Activated naive CD4-positive, alpha-beta T cell treated with anti-CD3 and anti-CD28 coated beads, Interleukin-2, amount 10 ng/mL, durations not matched to agents 7 days and 5 days (primary cell): ENCODE measurements at regions of chr7 and their contacts with region 1.

Region 1: GRCh38 chr7:38215735-38216670 is 38.0 kb downstream of the STARD3NL start:
- DNase-seq: peak; percentile 85
- H3K4me3 Mint-ChIP-seq: no peak overlapping the region
- H3K27ac Mint-ChIP-seq: no peak overlapping the region
- H3K4me1 Mint-ChIP-seq: peaks cover 32% of the 10 kb centered on the region
- H3K27me3 Mint-ChIP-seq: no peaks in the 10 kb centered on the region

Region 2: DNA sequence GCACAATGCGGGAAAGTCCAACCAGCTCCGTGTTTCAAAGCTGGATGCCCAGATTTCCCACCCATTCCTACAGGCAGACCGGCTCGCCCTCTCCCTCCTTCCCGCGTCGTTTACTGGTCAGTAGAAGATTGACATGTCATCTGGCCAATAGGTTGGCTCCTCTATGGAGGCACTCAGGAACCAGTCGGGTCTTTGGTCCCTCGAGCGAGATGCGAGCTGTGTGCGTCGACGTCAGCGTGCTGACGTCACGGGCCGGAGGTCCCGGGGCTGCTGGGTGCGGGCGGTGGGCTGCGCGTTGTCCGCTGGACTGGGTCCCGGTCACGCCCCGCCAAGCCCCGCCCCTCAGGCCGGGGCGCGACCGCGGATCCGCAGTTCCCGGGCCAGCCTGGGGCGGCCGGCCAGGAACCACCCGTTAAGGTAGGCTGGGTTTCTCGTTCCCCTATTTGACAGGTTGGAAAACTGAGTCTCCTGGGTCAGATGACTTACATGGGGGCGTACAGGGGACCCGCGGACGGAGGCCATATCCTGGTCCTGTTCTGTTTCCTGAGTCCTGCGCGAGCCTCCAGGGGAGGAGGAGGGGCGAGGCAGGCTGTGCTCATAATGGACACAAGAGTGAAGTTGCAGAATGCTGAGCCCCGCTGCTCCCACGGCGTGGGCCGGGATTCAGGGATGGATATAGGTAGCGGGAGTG is 37.9 kb before region 1 on chr7 and contains the start of gene STARD3NL:
- CTCF ChIA-PET with region 1: interaction called, 10 read pairs
- DNase-seq: peak; percentile 92
- H3K4me3 Mint-ChIP-seq: peak within 1 kb of the TSS; percentile 97
- H3K27ac Mint-ChIP-seq: peak within 1 kb of the TSS; percentile 91
- H3K4me1 Mint-ChIP-seq: peaks cover 32% of the 10 kb centered on the region
- H3K27me3 Mint-ChIP-seq: peaks cover 7% of the 10 kb centered on the region

Region 3: GRCh38 chr7:38198366-38198765 is 17.6 kb before region 1 on chr7:
- CTCF ChIA-PET with region 1: interaction called, 19 read pairs
- DNase-seq: no peak
- H3K4me3 Mint-ChIP-seq: no peak overlapping the region
- H3K27ac Mint-ChIP-seq: no peak overlapping the region
- H3K4me1 Mint-ChIP-seq: peaks cover 3% of the 10 kb centered on the region
- H3K27me3 Mint-ChIP-seq: no peaks in the 10 kb centered on the region

Region 4: GRCh38 chr7:38318803-38319416 is 102.9 kb after region 1 on chr7:
- CTCF ChIA-PET with region 1: interaction called, 59 read pairs
- DNase-seq: no peak
- H3K4me3 Mint-ChIP-seq: no peak overlapping the region
- H3K27ac Mint-ChIP-seq: peak overlapping the region; percentile 73
- H3K4me1 Mint-ChIP-seq: peaks cover 39% of the 10 kb centered on the region
- H3K27me3 Mint-ChIP-seq: no peaks in the 10 kb centered on the region

Region 5: GRCh38 chr7:38360776-38361175 is 144.8 kb after region 1 on chr7:
- CTCF ChIA-PET with region 1: interaction called, 285 read pairs
- DNase-seq: no peak
- H3K4me3 Mint-ChIP-seq: peak overlapping the region; percentile 97
- H3K27ac Mint-ChIP-seq: peak overlapping the region; percentile 49
- H3K4me1 Mint-ChIP-seq: peaks cover 62% of the 10 kb centered on the region
- H3K27me3 Mint-ChIP-seq: no peaks in the 10 kb centered on the region

Region 6: DNA sequence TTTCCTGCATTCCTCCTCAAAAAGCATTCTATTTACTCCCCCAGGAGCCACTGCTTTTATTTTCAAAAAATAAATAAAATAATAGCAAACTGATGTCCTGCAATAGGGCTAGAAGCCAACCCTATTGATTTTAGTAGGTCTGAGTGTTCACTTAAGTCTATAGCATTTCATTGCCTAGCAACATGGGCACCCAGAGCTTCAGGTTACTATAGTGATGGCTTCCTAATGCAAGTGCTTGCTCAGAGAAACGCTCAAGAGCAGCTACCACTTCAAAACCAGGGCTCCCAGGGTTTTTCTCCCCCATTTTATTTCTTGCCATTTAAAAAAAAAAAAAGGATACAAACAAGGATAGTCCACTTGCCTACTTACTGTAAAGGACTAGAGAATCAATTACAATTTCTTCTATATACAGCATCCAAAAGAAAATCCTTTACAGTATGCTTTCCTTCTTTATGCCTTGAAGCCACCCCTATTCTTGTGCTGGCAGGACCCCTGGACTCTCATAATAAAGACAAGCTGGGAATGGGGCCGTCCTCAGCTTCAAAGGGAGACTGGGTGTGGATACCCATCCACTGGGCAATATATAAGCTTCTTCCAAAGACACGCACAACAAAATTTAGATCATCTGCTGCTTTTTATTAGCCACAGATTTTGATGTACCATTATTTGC is 559.6 kb after region 1 on chr7:
- CTCF ChIA-PET with region 1: no interaction called
- DNase-seq: no peak
- H3K4me3 Mint-ChIP-seq: no peak overlapping the region
- H3K27ac Mint-ChIP-seq: no peak overlapping the region
- H3K4me1 Mint-ChIP-seq: no peaks in the 10 kb centered on the region
- H3K27me3 Mint-ChIP-seq: no peaks in the 10 kb centered on the region